RWPE1 (cell line): ENCODE measurements at regions of chr7 and their contacts with region 1.

Region 1: GRCh38 chr7:77771901-77772300 is 26.3 kb downstream of the TMEM60 start:
- DNase-seq: no peak
- H3K27ac ChIP-seq: no peak overlapping the region
- CTCF ChIP-seq: no peak

Region 2: GRCh38 chr7:77538338-77539212 is 233.3 kb before region 1 on chr7:
- CTCF ChIA-PET with region 1: no interaction called
- POLR2A ChIA-PET with region 1: interaction called, 10 read pairs
- DNase-seq: peak; percentile 94
- H3K27ac ChIP-seq: peak overlapping the region; percentile 98
- CTCF ChIP-seq: no peak

Region 3: GRCh38 chr7:77651573-77652162 is 120.2 kb before region 1 on chr7:
- CTCF ChIA-PET with region 1: interaction called, 10 read pairs
- POLR2A ChIA-PET with region 1: no interaction called
- DNase-seq: peak; percentile 34
- H3K27ac ChIP-seq: no peak overlapping the region
- CTCF ChIP-seq: peak; percentile 84